Mammary epithelial cell (primary cell): ENCODE measurements at regions of chr22 and their contacts with region 1.

Region 1: DNA sequence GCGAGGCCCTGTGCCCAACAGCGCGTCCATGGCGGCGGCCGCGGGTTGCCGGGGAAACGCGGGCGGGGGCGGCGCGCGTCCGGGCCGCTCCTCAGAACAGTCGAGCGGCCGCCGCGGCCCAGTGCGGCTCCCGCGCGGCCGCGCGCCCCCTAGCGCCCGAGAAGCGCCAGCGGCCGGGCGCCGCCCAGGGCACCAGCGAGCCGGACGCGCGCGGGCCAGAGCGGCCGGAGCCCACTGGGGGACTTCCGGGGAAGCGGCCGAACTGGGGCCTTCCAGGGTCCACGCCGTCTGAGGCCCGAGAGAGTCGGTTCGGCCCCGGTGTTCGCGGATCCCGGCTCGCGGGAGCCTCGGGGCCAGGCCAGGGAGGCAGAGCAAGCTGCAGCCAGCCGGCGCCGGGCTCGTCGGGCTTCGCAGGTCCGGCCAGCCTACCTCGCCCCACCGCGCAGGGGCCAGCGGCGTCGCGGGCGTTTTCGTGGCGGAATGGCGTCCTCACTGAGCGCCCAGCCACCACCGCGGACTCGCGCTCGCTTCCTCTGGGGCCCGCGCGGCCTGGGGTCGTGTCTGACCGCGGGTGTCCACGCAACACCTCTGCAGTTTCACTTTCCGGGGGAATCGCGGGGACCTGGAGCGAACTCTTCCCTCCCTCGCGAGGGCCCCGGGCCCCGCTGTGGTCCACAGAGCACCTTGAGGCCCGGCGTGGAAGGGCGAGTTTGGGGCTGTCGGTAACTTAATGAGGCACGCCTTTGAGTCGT is at the start of gene DENND6B:
- DNase-seq: peak; percentile 64
- H3K4me3 ChIP-seq: peak within 1 kb of the TSS; percentile 26 to 80 (median 77)
- H3K27ac ChIP-seq: peak within 1 kb of the TSS; percentile 54
- H3K4me1 ChIP-seq: peaks cover 13% of the 10 kb centered on the region
- H3K27me3 ChIP-seq: no peaks in the 10 kb centered on the region
- CTCF ChIP-seq: peak; percentile 40 to 45
- total RNA-seq, gene DENND6B: 2.0 to 3.4 TPM

Region 2: DNA sequence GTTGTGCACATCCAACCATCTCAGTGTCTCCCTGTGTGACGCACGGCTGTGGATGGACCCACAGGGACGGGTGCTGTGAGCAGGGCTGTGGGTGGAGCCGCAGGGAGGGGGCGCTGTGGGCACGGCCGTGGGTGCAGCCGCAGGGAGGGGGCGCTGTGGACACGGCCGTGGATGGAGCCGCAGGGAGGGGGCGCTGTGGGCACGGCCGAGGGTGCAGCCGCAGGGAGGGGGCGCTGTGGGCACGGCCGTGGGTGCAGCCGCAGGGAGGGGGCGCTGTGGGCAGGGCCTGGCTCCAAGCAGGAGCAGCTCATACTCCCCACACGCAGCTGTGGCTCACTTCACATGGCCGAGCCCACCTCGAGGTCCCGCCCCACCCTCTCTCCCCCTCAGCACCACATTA is 51.0 kb before region 1 on chr22:
- CTCF ChIA-PET with region 1: interaction called, 20 read pairs
- dilution Hi-C with region 1: no loop called
- in situ Hi-C with region 1: loop called (anchors 5 to 10 kb)
- intact Hi-C with region 1: loop called (anchors 1 kb)
- DNase-seq: no peak
- H3K4me3 ChIP-seq: no peak overlapping the region
- H3K27ac ChIP-seq: no peak overlapping the region
- H3K4me1 ChIP-seq: peaks cover 7% of the 10 kb centered on the region
- H3K27me3 ChIP-seq: no peaks in the 10 kb centered on the region
- CTCF ChIP-seq: peak; percentile 40 to 66

Region 3: GRCh38 chr22:50311606-50312351 is 15.4 kb before region 1 on chr22:
- CTCF ChIA-PET with region 1: no interaction called
- dilution Hi-C with region 1: no loop called
- in situ Hi-C with region 1: no loop called
- intact Hi-C with region 1: no loop called
- DNase-seq: no peak
- H3K4me3 ChIP-seq: no peak overlapping the region
- H3K27ac ChIP-seq: no peak overlapping the region
- H3K4me1 ChIP-seq: peaks cover 3% of the 10 kb centered on the region
- H3K27me3 ChIP-seq: no peaks in the 10 kb centered on the region
- CTCF ChIP-seq: no peak

Region 4: DNA sequence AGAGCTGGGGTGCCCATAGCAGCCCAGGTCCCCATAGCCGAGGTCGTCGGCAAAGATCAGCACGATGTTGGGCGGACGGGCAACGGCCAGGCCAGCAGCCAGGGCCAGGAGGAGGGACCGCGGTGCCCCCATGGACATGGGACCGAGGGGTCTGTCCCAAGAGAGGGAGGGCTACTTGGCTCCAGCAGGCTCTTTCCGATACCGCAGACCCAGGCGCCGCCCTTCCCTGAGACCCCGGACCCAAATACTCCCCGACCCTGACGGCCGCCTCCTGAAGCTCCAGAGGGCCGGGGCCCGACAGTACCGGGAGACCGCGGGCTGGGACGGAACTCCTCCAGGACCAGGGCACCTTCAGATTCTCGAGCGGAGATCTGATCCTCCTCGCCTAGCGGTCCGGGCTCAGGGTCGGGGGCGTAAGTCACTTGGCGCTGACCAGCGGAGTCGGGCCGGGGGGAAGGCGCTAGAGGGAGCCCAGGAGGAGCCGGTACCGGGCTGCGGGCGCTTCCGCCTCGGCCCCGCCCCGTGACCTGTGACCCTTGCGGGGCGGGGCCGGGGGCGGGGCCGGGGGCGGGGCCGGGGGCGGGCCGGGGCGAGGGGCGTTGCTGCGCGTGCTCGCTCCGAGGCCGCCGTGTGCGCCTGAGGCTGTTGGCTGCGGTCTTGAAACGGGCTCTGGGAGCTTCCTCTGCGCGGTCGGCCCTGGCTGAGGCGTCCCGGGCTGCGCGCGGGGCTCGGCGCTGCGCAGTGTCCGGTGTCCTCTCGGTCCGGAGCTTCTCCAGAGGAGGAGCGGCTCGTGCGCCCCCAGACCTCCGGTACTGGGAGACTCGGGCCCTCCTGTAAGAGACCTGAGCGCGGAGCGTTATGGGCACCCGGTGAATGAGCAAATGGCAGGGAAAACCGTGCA is 300.8 kb after region 1 on chr22 and contains the start of gene ARSA:
- CTCF ChIA-PET with region 1: no interaction called
- dilution Hi-C with region 1: no loop called
- in situ Hi-C with region 1: no loop called
- intact Hi-C with region 1: no loop called
- DNase-seq: peak; percentile 76
- H3K4me3 ChIP-seq: peak within 1 kb of the TSS; percentile 88 to 98 (median 91)
- H3K27ac ChIP-seq: peak within 1 kb of the TSS; percentile 14
- H3K4me1 ChIP-seq: peaks cover 23% of the 10 kb centered on the region
- H3K27me3 ChIP-seq: no peaks in the 10 kb centered on the region
- CTCF ChIP-seq: peak in 1 of 2 donors; percentile 64
- total RNA-seq, gene ARSA: 32.7 to 50.4 TPM